AG04450 (cell line): ENCODE measurements at regions of chr18 and their contacts with region 1.

Region 1: DNA sequence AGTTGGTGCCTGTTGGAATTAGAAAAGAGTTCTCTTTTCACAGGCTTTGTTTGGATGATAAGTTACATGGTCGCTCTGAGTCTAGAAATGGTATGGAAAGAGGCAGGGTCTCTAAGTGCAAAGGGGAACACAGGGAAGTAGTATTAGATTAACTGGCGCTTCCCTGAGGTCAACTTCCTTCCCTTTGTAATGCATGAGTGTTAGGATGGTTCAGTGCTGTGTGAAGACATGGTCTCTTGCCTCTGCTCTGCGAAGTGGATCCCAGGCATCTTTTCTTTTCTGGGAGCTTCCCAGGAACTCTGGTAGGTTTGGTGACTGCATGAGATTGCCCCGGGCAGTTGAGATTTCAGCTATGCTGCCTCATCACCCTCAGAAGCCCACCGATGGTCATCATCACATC is 170.3 kb downstream of the MIB1 start:
- DNase-seq: no peak
- H3K4me3 ChIP-seq: no peak overlapping the region
- H3K27ac ChIP-seq: no peak overlapping the region
- H3K27me3 ChIP-seq: peaks cover 11% of the 10 kb centered on the region
- CTCF ChIP-seq: no peak

Region 2: DNA sequence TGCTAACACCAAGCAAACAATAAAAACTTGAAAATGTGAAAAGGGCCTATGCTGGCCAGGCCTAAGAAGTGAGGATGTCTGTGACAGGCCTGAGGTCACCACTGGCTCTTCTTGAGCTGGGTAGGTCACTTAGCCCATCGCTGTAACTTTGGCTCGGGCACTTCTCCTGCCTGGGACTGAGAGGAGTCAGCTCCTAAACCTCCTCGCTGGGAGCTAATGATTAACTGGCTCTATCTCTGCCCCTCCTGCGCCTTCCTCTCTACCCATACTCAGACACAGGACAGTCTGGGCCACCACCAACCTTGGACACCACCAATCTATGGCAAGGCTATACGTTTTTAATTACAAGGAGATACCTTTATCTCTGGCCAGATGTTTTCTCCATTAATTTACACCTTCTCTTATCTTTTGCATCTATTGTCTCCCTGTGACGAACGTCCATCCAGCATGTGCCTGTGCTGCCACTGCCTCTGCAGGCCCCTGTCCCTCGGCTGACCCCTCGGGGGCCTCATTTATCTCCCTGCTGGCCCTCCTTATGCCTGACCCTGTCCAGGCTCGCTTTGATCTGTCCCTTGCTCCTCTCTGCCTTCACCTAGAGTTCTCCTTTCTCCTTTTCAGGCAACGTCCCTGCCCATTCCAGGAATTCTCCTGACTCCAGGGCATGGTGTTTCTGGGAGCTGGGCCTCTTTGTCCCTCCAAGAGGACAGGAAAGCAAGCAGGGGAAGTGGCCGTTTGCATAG is 109.4 kb after region 1 on chr18:
- CTCF ChIA-PET with region 1: interaction called, 10 read pairs
- POLR2A ChIA-PET with region 1: no interaction called
- DNase-seq: no peak
- H3K4me3 ChIP-seq: no peak overlapping the region
- H3K27ac ChIP-seq: no peak overlapping the region
- H3K27me3 ChIP-seq: no peaks in the 10 kb centered on the region
- CTCF ChIP-seq: no peak